ENCODE measurements at regions of chr20 and their contacts with region 1.

Region 1: DNA sequence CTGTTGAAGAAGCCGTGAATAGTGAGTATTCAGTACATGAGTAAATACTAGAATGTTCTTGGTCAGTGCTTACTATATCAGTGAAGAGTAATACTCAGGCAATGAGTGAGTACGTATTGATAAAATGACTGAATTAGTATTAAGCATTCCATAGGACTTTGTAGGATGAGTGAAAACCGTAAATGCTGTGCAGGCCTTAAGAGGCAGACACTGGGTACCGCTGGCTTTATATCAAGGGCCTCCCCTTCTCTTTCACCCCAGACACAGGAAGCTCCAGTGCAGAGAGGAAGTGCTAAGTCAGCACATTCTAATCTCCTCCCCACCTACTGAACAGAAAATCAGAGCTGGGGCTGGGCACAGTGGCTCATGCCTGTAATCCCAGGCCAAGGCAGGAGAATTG is 24.2 kb downstream of the POFUT1 start:
- DNase-seq: peak; percentile 68
- ATAC-seq: peak; percentile 89
- H3K4me3 Mint-ChIP-seq: peak overlapping the region; percentile 52
- H3K27ac Mint-ChIP-seq: peak overlapping the region; percentile 98
- H3K4me1 Mint-ChIP-seq: peaks cover 42% of the 10 kb centered on the region
- H3K27me3 Mint-ChIP-seq: no peaks in the 10 kb centered on the region

Region 2: DNA sequence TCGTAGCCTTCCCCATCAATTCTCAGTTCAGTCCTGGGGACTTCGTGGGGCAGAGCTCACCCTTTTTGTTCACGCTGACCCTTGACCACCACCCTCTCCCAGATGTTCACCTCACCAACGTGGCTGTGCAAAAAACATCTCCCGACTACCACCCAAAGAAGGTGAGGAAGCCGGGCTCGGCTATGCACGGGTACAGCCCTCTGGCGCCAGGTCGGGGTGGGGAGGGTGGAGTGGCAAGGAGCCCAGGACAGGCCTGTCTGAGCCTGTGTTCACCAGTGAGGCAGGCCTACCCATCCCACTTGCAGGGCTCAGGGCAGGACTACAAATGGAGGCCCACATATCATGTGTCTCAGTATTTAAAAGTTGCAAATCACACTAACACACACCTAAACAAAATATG is 298.1 kb before region 1 on chr20:
- CTCF ChIA-PET with region 1: no interaction called
- POLR2A ChIA-PET with region 1: no interaction called
- intact Hi-C with region 1: no loop called
- DNase-seq: no peak
- ATAC-seq: no peak
- H3K4me3 Mint-ChIP-seq: no peak overlapping the region
- H3K27ac Mint-ChIP-seq: no peak overlapping the region
- H3K4me1 Mint-ChIP-seq: no peaks in the 10 kb centered on the region
- H3K27me3 Mint-ChIP-seq: peaks cover 2% of the 10 kb centered on the region

Region 3: DNA sequence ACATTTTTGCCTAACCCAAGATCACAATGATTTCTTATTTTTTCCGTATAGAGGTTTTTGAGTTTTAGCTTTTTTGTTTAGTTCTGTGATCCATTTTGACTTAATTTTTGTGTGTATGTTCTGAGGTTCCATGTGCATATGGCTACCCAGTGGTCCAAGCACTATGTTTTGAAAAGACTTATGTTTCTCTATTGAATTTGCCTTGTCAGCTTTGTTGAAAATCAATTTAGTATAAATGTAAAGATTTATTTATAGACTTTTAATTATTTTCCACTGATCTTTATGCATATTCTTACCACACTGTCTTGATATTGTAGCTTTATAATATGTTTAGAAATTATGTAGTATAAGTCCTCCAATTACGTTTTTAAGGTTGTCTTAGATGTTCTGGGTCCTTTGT is 112.1 kb before region 1 on chr20:
- CTCF ChIA-PET with region 1: no interaction called
- POLR2A ChIA-PET with region 1: no interaction called
- intact Hi-C with region 1: no loop called
- DNase-seq: no peak
- ATAC-seq: no peak
- H3K4me3 Mint-ChIP-seq: no peak overlapping the region
- H3K27ac Mint-ChIP-seq: no peak overlapping the region
- H3K4me1 Mint-ChIP-seq: peaks cover 24% of the 10 kb centered on the region
- H3K27me3 Mint-ChIP-seq: no peaks in the 10 kb centered on the region

Region 4: DNA sequence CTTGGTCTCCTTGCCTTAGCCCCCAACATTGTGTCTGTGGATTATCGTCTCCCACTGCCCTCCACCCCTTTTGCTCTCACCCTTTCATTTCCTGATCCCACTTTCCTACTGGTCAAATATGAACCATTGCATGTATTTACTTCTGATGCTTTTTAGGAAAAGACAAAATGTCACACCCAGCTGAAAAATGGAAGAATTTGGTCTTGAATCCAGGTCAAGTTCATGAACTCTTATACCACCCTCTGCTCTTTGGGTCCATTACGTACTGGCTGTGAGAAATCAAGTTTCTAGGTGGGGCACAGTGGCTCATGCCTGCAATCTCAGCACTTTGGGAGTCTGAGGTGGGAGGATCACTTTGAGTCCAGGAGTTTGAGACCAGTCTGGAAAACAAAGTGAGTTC is 29.8 kb after region 1 on chr20:
- CTCF ChIA-PET with region 1: no interaction called
- POLR2A ChIA-PET with region 1: no interaction called
- intact Hi-C with region 1: no loop called
- DNase-seq: no peak
- ATAC-seq: no peak
- H3K4me3 Mint-ChIP-seq: no peak overlapping the region
- H3K27ac Mint-ChIP-seq: no peak overlapping the region
- H3K4me1 Mint-ChIP-seq: peaks cover 8% of the 10 kb centered on the region
- H3K27me3 Mint-ChIP-seq: no peaks in the 10 kb centered on the region

Region 5: DNA sequence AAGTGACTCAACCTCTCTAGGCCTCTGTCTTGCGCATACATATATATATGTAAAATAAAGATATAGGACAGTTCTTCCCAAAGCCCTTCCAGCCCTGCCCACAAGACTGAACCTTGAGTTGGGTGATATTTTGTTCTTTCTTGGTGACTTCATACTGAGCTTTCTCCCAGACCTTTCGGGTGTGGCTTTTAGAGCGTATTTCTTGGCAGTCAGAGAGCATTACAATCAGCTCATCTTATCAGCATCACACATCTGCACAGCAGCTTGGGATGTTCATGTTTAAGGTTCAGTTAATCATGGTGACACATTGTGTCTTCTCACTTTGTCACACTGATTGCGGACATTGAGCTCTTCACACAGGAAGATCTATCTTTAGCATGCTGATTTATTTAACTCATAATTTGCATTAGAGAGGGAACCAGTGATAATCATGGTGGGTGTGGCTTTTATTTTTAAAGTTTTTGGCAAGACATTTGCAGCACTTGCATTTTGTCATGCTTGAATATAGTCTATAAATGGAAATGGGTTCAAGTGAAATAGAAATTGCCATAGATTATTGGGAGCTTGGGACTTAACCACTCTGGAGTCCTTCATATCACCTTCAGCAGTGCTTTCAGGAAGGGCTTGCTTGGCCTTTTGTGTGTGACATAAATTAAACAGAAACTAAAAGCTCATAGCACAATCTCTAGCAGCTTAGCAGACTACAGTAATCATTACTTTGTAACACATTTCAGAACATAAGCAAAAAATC is 53.9 kb after region 1 on chr20:
- CTCF ChIA-PET with region 1: interaction called, 13 read pairs
- POLR2A ChIA-PET with region 1: interaction called, 23 read pairs
- intact Hi-C with region 1: loop called in 1 of 2 experiments (anchors 1 kb)
- DNase-seq: peak; percentile 70
- ATAC-seq: peak; percentile 83
- H3K4me3 Mint-ChIP-seq: peak overlapping the region; percentile 58
- H3K27ac Mint-ChIP-seq: peak overlapping the region; percentile 97
- H3K4me1 Mint-ChIP-seq: peaks cover 88% of the 10 kb centered on the region
- H3K27me3 Mint-ChIP-seq: no peaks in the 10 kb centered on the region

Measured in activated CD4-positive, alpha-beta T cell treated with anti-CD3 and anti-CD28 coated beads for 36 hours (primary cell).